Activated T-helper 1 cell treated with anti-CD3 and anti-CD28 coated beads, Interleukin-12 subunit alpha, Interleukin-12 subunit beta, Interleukin-2, Interleukin-4 antibody, amounts not matched to agents 30 ng/mL and 10 ng/mL and 1 ng/mL, durations not matched to agents 14 hours and 24 hours and 36 hours (primary cell): ENCODE measurements at regions of chr3 and their contacts with region 1.

Region 1: DNA sequence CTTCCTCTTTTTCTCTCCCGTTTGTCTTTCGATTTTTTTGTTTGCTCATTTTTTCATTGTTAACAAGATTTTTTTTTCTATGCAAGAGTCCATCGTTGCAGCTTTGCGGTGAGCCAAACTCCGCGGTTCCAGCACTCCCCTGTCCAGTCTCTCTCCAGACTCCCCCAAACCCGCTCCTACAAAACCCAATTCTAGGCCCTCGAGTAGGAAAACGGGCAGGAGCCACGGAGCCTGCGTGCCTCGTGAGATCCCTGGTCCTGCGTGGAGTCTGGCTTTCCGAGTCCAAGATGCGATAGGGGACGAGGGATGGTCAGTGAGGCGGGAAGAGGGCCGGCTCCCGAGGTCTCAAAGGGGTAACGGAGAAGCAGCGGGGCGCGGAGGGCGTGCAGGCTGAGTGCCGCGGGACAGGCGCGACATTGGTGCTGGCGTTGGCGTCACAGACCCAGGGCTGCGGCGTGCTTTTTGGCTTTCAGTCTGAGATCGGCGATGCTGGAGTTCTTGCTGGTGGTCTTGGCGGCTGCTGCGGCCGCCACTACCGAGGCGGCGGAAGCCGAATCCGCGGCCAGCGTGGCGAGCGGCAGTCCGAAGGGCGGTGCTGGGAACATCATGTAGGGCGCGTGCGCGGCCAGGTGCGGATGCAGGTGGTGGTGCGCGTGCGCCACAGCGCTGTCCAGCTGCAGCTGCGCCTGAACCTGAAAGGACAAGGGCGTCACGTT is 8.5 kb downstream of the SHOX2 start:
- DNase-seq: peak; percentile 73
- H3K4me3 Mint-ChIP-seq: peak overlapping the region; percentile 89
- H3K27ac Mint-ChIP-seq: peak overlapping the region; percentile 84
- H3K4me1 Mint-ChIP-seq: peaks cover 18% of the 10 kb centered on the region
- H3K27me3 Mint-ChIP-seq: peaks cover 75% of the 10 kb centered on the region

Region 2: GRCh38 chr3:156918746-156919145 is 1179.0 kb before region 1 on chr3:
- intact Hi-C with region 1: no loop called
- DNase-seq: no peak
- H3K4me3 Mint-ChIP-seq: no peak overlapping the region
- H3K27ac Mint-ChIP-seq: no peak overlapping the region
- H3K4me1 Mint-ChIP-seq: no peaks in the 10 kb centered on the region
- H3K27me3 Mint-ChIP-seq: peaks cover 9% of the 10 kb centered on the region

Region 3: GRCh38 chr3:158532099-158532734 is 434.5 kb after region 1 on chr3:
- intact Hi-C with region 1: loop called (anchors 5 kb)
- DNase-seq: no peak
- H3K4me3 Mint-ChIP-seq: no peak overlapping the region
- H3K27ac Mint-ChIP-seq: no peak overlapping the region
- H3K4me1 Mint-ChIP-seq: no peaks in the 10 kb centered on the region
- H3K27me3 Mint-ChIP-seq: no peaks in the 10 kb centered on the region